Activated naive CD4-positive, alpha-beta T cell treated with anti-CD3 and anti-CD28 coated beads for 36 hours (primary cell): ENCODE measurements at regions of chr12 and their contacts with region 1.

Region 1: DNA sequence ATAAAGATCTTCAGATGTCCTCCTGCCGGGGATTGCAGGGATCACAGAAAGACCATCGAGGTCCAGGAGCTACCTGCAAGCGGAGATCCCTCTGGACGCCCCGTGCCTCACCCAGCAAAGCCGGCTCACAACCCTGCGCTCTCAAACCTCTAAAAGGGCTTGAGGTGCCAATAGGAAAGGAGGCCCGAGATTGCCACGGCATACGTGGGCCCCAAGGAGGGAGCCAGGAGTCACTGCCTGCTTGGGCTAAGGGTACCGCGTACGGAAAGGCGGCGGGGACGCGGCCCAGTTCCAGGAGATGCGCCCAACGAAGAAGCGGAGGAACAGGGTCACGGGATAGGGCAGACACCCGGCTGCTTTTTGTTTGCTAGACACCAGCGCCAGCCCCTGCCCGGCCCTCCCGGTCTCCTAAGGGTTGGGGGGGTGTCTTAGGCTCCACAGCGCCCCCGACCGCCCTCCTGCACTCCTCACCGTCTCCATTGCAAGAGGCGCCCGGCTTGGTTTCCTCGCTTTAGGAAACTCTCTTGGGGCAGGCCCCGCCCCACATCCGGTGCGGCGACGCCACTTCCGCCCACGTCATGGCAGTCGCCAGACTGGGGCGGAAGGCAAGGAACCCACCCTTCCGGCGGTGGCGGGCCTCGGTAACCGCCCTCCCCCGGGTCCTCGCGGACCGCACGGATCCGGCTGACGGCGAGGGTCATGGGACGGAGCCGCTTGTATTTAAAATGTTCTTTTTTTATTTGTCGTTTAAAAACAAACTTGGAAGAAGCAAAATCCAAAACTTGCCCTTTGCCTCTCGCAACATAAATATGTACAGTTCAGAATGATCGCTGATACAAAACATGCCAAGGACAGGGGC is at the start of gene PRKAG1:
- DNase-seq: peak; percentile 96
- H3K4me3 Mint-ChIP-seq: peak within 1 kb of the TSS; percentile 87
- H3K27ac Mint-ChIP-seq: peak within 1 kb of the TSS; percentile 94
- H3K4me1 Mint-ChIP-seq: peaks cover 36% of the 10 kb centered on the region
- H3K27me3 Mint-ChIP-seq: no peaks in the 10 kb centered on the region
- total RNA-seq, gene PRKAG1: 49.4 to 50.9 TPM

Region 2: GRCh38 chr12:48865434-48866290 is 152.8 kb before region 1 on chr12 and contains the start of gene RND1:
- CTCF ChIA-PET with region 1: interaction called, 3 read pairs
- intact Hi-C with region 1: loop called (anchors 1 kb)
- DNase-seq: peak; percentile 93
- H3K4me3 Mint-ChIP-seq: peak within 1 kb of the TSS; percentile 87
- H3K27ac Mint-ChIP-seq: peak within 1 kb of the TSS; percentile 62
- H3K4me1 Mint-ChIP-seq: peaks cover 22% of the 10 kb centered on the region
- H3K27me3 Mint-ChIP-seq: peaks cover 22% of the 10 kb centered on the region
- total RNA-seq, gene RND1: 6.8 to 7.4 TPM

Region 3: GRCh38 chr12:48995061-48995879 is 23.2 kb before region 1 on chr12:
- CTCF ChIA-PET with region 1: interaction called, 65 read pairs
- intact Hi-C with region 1: loop called (anchors 1 kb)
- DNase-seq: peak; percentile 69
- H3K4me3 Mint-ChIP-seq: peak overlapping the region; percentile 10
- H3K27ac Mint-ChIP-seq: no peak overlapping the region
- H3K4me1 Mint-ChIP-seq: peaks cover 33% of the 10 kb centered on the region
- H3K27me3 Mint-ChIP-seq: peaks cover 54% of the 10 kb centered on the region

Region 4: GRCh38 chr12:49069507-49070346 is 51.2 kb after region 1 on chr12 and contains the start of gene RHEBL1:
- CTCF ChIA-PET with region 1: interaction called, 7 read pairs
- intact Hi-C with region 1: loop called (anchors 1 kb)
- DNase-seq: peak; percentile 100
- H3K4me3 Mint-ChIP-seq: peak within 1 kb of the TSS; percentile 99
- H3K27ac Mint-ChIP-seq: peak within 1 kb of the TSS; percentile 76
- H3K4me1 Mint-ChIP-seq: peaks cover 12% of the 10 kb centered on the region
- H3K27me3 Mint-ChIP-seq: no peaks in the 10 kb centered on the region
- total RNA-seq, gene RHEBL1: 11.8 to 15.2 TPM

Region 5: GRCh38 chr12:49130151-49131050 is 111.9 kb after region 1 on chr12:
- CTCF ChIA-PET with region 1: interaction called, 4 read pairs
- intact Hi-C with region 1: loop called (anchors 1 kb)
- DNase-seq: peak; percentile 96
- H3K4me3 Mint-ChIP-seq: peak overlapping the region; percentile 97
- H3K27ac Mint-ChIP-seq: peak overlapping the region; percentile 100
- H3K4me1 Mint-ChIP-seq: peaks cover 43% of the 10 kb centered on the region
- H3K27me3 Mint-ChIP-seq: no peaks in the 10 kb centered on the region

Region 6: DNA sequence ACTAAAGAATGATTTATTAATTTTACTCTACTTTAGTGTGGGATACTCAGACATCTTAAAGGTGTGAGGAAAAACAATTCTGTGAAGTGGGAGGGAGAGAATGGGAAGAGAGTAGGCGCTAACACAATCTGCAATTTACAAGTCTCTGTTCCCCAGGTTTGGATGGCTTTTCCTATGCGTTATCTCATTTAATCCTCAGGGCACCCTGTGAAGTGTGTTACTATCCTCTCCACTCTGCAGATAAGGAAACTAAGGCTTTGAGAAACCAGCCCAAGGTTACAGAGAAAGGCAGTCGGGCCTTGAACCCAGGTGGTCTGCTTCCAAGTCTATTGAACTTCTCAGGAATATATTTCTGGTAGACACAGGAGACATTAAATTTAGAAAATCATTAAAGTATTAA is 210.2 kb after region 1 on chr12:
- CTCF ChIA-PET with region 1: no interaction called
- intact Hi-C with region 1: no loop called
- DNase-seq: no peak
- H3K4me3 Mint-ChIP-seq: no peak overlapping the region
- H3K27ac Mint-ChIP-seq: no peak overlapping the region
- H3K4me1 Mint-ChIP-seq: peaks cover 3% of the 10 kb centered on the region
- H3K27me3 Mint-ChIP-seq: no peaks in the 10 kb centered on the region